ENCODE measurements at regions of chr9 and their contacts with region 1.

Region 1: GRCh38 chr9:92616655-92617111 is 53.2 kb downstream of the IPPK start:
- DNase-seq: no peak
- ATAC-seq: peak; percentile 27

Region 2: DNA sequence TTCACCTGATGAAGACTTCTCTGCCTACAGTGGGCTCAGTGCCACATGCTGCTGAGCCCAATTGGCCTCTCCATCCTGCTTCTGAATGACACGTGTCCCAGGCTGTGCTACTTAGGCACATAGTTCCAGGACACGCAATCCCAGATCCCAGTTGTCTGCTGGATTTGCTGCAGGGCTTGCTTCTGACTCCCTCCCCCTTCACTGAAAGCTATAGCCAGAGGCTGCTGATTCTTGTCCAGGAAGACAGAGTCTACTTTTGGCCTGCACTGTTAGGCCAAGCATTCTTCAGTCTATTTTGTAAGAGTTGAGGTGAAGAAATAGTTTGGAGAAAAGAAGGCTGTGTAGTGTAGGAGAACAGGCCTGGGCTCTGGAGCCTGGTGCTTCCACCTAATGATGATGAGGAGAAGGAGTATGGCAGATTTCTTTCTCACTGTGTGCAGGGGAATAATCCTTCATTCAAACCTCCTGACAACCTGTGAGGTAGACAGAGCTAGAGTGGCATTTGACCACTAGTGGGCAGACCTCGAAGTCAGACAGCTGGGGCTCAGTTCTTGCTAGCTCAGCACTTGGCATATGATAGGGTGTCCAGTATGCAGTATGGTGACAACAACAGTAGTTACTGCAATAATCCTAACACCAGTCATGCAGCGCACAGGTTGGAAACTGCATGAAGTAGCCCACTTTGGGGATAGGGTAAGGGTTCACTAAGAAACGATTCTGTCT is 114.9 kb before region 1 on chr9:
- intact Hi-C with region 1: loop called (anchors 10 kb)
- DNase-seq: no peak
- ATAC-seq: peak; percentile 85

Measured in Right ventricle myocardium inferior (tissue), 1 donor.